ENCODE measurements at regions of chr6 and their contacts with region 1.

Region 1: DNA sequence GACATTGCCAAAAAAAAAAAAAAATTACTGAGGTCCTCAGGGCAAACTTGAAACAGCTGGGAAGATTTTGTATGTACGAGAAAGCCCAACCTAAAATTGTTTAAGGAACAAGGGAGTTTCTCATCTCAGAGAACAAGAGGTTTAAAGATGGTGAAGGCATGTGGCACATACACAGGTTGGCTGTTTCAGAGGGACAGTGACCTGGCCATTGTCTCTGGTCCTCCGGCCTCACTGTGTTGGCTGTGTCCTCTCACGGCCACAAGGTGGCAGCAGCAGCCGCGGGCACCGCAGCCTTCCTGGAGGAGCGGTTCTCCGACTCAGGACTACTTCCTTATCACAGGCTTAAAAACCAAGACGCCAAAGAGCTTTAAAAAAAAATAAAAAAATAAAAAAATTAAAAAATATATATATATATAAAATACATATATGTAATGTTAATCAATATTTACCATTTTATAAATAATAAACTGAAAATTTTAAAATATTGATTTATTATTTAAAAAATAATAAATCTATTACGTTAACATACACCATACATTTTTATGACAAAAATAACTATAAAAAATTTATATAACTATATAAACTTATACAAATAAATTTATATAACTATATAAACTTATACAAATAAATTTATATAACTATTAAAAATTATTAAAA is 52.8 kb downstream of the GTF2H5 start:
- DNase-seq: peak; percentile 80
- H3K4me3 Mint-ChIP-seq: no peak overlapping the region
- H3K27ac Mint-ChIP-seq: no peak overlapping the region
- H3K4me1 Mint-ChIP-seq: peaks cover 3% of the 10 kb centered on the region
- H3K27me3 Mint-ChIP-seq: peaks cover 3% of the 10 kb centered on the region

Region 2: GRCh38 chr6:158231551-158232315 is 10.8 kb after region 1 on chr6:
- CTCF ChIA-PET with region 1: interaction called, 26 read pairs
- POLR2A ChIA-PET with region 1: no interaction called
- DNase-seq: peak; percentile 76
- H3K4me3 Mint-ChIP-seq: peak overlapping the region; percentile 86
- H3K27ac Mint-ChIP-seq: peak overlapping the region; percentile 64
- H3K4me1 Mint-ChIP-seq: peaks cover 26% of the 10 kb centered on the region
- H3K27me3 Mint-ChIP-seq: no peaks in the 10 kb centered on the region

Region 3: DNA sequence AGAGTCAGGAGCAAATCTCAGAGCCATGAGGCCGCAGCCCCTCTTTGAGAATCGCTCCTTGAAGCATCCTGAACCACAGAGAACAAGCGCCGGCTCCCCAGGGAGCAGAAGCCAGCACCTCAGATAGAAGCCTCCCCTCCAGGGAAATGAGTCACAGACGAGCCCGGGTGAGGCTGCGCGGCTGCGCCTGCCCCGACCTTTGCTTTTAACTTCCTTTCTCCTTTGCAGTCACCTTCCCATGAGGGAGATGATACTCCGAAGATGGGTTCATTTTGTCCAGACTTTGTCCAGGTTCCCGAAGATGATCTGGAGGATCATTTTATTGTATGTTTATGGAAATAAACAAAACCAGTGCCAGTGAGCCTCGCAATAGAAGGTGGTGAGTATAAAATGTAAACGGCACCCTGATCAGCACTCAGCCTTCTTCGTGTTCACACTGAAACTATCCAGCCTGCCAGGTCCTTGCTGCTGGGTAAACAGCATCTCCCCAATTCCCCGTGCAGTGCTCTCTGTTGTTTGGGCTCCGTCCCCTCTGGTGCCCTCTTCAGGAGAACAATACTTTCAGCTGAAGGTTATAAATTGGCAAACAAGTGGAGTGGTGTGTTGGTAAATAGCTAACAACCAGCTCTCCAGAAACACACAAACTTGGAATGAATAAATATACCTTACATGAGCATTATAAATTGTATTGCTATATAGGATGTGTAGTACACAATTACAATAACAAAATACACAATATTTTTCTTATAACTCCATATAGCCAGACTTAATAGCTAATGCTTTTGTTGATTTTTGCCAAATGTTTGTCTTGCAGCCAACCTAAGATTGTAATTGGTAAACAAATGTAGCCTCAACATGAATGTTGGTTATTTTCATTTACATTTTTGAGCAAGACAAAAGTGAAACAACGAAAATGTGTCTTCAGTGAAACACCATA is 297.5 kb after region 1 on chr6:
- CTCF ChIA-PET with region 1: interaction called, 27 read pairs
- POLR2A ChIA-PET with region 1: no interaction called
- DNase-seq: peak; percentile 74
- H3K4me3 Mint-ChIP-seq: peak overlapping the region; percentile 81
- H3K27ac Mint-ChIP-seq: peak overlapping the region; percentile 87
- H3K4me1 Mint-ChIP-seq: peaks cover 41% of the 10 kb centered on the region
- H3K27me3 Mint-ChIP-seq: peaks cover 11% of the 10 kb centered on the region

Region 4: DNA sequence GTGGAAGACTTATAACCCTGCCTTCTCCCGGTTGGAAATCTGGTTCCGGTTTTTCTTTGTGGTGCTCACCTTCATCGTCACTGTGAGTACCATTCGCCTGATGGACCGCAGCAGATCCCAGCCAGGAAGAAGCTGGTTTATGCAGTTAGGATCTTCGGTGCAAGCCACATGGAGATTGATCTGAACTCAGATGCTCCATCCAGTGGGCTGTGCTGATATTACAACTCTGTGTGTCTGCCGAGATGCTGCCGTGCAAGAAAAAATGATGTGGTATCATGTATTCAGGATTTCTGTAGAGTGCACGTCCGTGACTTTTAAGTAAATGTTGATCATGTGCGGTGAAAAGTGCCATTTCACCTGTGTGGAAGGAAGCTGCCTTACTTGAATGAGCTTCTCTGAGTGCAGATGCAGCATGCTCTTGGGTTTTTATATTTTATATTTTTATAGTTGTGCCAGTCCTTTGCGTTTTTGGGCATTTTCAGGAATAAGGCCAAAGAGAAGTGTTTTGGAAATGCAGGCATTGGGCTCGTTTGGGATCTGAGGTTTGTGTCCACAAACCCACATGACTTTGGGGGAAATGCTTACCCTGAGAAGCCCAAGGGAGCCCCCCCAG is 384.5 kb after region 1 on chr6:
- CTCF ChIA-PET with region 1: interaction called, 21 read pairs
- POLR2A ChIA-PET with region 1: no interaction called
- DNase-seq: peak; percentile 60
- H3K4me3 Mint-ChIP-seq: no peak overlapping the region
- H3K27ac Mint-ChIP-seq: no peak overlapping the region
- H3K4me1 Mint-ChIP-seq: peaks cover 7% of the 10 kb centered on the region
- H3K27me3 Mint-ChIP-seq: no peaks in the 10 kb centered on the region

Measured in activated CD4-positive, alpha-beta memory T cell treated with anti-CD3 and anti-CD28 coated beads, Interleukin-2, amount 10 ng/mL, durations not matched to agents 7 days and 5 days (primary cell).